ENCODE measurements at regions of chr5 and their contacts with region 1.

Region 1: GRCh38 chr5:153964880-153965645 is 73.6 kb downstream of the FAM114A2 start:
- DNase-seq: peak; percentile 60
- H3K4me3 Mint-ChIP-seq: no peak overlapping the region
- H3K27ac Mint-ChIP-seq: no peak overlapping the region
- H3K4me1 Mint-ChIP-seq: peaks cover 7% of the 10 kb centered on the region
- H3K27me3 Mint-ChIP-seq: peaks cover 2% of the 10 kb centered on the region

Region 2: DNA sequence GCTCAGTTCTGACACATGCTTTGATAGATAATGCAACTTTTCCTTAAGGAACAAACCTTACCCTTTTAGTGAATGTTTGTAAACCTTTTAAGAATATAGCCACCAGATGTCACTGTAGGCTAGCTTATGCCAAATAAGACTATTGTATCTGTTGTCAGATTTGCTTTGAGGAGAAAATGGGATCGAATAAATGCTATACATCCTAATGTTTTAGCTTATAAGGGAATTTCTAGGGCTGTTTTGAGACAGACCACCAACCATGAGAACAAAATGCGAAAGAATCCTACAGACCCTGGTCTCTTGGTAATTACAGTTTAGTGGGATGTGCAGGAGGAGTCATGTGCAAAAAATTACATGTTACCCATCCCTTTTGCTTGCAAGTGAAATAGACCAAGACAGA is 1432.3 kb before region 1 on chr5:
- CTCF ChIA-PET with region 1: interaction called, 18 read pairs
- intact Hi-C with region 1: loop called (anchors 1 kb)
- DNase-seq: no peak
- H3K4me3 Mint-ChIP-seq: no peak overlapping the region
- H3K27ac Mint-ChIP-seq: no peak overlapping the region
- H3K4me1 Mint-ChIP-seq: peaks cover 2% of the 10 kb centered on the region
- H3K27me3 Mint-ChIP-seq: no peaks in the 10 kb centered on the region

Region 3: DNA sequence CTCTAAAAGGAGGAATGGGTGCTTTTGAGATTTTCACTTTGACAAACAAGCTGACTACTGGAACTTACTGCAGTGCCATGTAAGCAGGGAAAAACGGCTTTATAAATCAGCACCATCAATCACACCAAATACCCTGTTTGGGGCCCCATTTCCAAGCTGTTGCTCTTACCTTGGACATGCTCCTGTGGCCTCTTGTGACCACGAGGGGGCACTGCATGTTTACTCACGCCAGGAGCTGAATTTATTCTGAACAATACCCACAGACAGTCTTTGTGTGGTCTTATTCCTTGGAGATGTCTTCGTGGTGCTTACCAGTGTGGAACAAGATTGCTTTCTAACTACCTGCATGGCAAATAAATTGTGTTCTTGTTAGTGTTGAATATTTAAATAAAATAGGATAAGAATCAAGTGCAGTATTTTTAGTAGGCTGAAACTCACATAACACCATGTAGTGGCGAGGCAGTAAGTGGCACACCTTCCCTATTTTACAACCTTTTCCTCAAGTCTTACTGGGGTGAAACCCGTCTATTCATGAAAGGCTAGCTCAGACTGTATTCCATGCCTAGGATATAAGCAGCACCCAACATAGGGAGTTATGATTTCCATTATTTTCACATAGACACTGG is 1404.4 kb before region 1 on chr5:
- CTCF ChIA-PET with region 1: interaction called, 5 read pairs
- intact Hi-C with region 1: loop called (anchors 1 kb)
- DNase-seq: peak; percentile 65
- H3K4me3 Mint-ChIP-seq: no peak overlapping the region
- H3K27ac Mint-ChIP-seq: no peak overlapping the region
- H3K4me1 Mint-ChIP-seq: no peaks in the 10 kb centered on the region
- H3K27me3 Mint-ChIP-seq: no peaks in the 10 kb centered on the region

Region 4: GRCh38 chr5:153496835-153497234 is 468.2 kb before region 1 on chr5:
- CTCF ChIA-PET with region 1: no interaction called
- intact Hi-C with region 1: loop called (anchors 1 kb)
- DNase-seq: no peak
- H3K4me3 Mint-ChIP-seq: no peak overlapping the region
- H3K27ac Mint-ChIP-seq: no peak overlapping the region
- H3K4me1 Mint-ChIP-seq: no peaks in the 10 kb centered on the region
- H3K27me3 Mint-ChIP-seq: peaks cover 9% of the 10 kb centered on the region

Region 5: DNA sequence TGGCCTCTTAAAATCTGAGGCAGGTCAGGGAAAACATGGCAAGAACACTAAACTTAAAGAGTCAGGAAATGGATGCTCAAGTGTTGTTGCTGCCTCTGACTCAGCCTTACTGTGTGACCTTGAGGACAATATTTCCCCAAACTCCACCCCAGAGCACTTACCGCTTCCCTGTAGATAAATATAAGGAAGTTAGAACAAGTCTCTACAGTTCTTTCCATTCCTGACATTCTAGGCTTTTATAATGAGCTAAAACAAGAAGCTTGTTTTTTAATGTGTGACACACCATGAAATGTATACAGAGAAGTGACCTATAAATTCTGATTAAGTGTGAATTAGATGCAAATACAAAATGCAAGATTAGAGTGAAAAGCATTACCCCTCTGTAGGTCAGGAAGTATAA is 345.3 kb before region 1 on chr5:
- CTCF ChIA-PET with region 1: no interaction called
- intact Hi-C with region 1: no loop called
- DNase-seq: no peak
- H3K4me3 Mint-ChIP-seq: no peak overlapping the region
- H3K27ac Mint-ChIP-seq: no peak overlapping the region
- H3K4me1 Mint-ChIP-seq: no peaks in the 10 kb centered on the region
- H3K27me3 Mint-ChIP-seq: no peaks in the 10 kb centered on the region

Region 6: GRCh38 chr5:153905219-153905618 is 59.8 kb before region 1 on chr5:
- CTCF ChIA-PET with region 1: no interaction called
- intact Hi-C with region 1: no loop called
- DNase-seq: no peak
- H3K4me3 Mint-ChIP-seq: no peak overlapping the region
- H3K27ac Mint-ChIP-seq: no peak overlapping the region
- H3K4me1 Mint-ChIP-seq: no peaks in the 10 kb centered on the region
- H3K27me3 Mint-ChIP-seq: no peaks in the 10 kb centered on the region

Region 7: DNA sequence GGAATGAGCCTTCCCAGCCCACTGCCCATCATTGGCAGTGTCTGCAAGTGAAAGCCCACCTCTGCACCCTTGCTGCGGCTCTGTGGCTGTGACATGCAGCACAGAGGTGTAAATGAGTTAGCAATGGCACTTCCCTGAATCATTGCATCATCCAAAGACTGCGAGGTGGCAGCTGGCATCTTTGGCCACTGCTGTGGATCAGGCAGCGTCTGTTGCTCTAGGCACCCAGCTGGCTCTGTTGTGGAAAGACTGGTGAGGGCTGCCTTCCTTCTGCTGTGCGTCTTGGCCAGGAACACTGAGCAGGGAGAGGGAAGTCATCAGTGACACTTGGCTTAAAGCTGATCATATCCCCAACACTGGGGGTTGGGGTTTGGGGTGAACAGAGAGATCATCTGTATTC is 138.2 kb after region 1 on chr5:
- CTCF ChIA-PET with region 1: no interaction called
- intact Hi-C with region 1: no loop called
- DNase-seq: no peak
- H3K4me3 Mint-ChIP-seq: no peak overlapping the region
- H3K27ac Mint-ChIP-seq: no peak overlapping the region
- H3K4me1 Mint-ChIP-seq: no peaks in the 10 kb centered on the region
- H3K27me3 Mint-ChIP-seq: no peaks in the 10 kb centered on the region

Region 8: DNA sequence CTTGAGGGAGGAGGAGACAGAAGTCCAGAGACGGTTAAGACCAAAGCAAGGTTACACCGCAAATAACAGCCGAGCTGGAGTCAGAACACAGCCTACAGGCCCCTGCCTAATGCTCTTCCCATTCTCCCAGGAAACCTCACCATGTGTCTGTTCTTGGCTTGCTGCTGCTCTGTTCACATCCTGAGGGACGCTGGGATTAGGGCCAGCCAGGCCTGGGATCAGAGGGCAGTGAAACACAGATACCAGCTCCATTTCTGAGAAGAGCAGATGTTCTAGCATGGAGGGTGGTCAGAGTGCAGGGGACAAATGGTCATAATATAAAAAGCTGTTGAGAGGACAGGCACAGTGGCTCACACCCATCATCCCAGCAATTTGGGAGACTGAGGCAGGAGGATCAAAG is 665.3 kb after region 1 on chr5:
- CTCF ChIA-PET with region 1: no interaction called
- intact Hi-C with region 1: no loop called
- DNase-seq: no peak
- H3K4me3 Mint-ChIP-seq: no peak overlapping the region
- H3K27ac Mint-ChIP-seq: no peak overlapping the region
- H3K4me1 Mint-ChIP-seq: no peaks in the 10 kb centered on the region
- H3K27me3 Mint-ChIP-seq: peaks cover 2% of the 10 kb centered on the region